T-cell (primary cell): ENCODE measurements at regions of chr1 and their contacts with region 1.

Region 1: DNA sequence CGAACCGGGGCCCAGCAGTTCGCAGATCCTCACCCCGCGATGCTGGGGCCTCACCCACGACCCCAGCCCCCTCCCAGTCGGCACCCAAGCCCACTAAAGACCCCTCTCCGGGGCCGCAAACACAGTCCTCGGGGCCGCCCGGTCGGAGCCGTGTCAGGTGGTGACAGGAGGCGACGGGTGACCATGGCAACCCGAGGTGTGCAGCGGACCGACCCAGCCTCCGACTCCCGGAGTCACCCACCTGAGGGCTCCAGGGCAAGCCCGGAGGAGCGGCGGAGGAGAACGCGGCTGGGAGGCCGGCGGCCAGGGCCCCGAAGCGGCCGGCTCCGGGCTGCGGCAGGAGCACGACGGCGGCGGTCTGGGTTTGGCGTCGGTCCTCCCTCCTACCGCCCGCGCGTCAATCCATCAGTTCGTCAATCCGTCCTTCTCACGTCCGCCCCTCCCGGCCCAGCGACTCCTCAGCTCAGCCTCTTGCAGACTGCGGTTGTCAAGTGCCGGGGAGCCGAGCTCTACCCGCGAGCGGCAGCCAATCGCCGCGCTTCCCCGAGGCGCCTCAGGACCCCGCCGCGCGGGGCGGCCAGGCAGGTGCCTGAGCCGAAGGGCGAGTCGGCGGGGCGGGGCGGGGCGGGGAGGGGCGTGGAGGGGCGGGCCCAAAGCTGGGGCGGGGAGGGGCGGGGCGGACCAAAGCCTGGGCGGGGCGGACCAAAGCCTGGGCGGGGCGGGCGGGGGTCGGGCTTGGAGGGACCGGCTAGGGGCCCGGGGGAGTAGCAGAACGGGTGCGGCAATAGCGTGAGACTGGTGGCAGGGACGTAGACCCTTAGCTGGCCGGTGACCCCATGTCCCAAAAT is at the start of gene WDR47:
- DNase-seq: peak; percentile 89 to 98 (median 96)
- ATAC-seq: peak; percentile 95 to 99 (median 98)
- H3K4me3 ChIP-seq: peak within 1 kb of the TSS; percentile 75 to 97
- H3K4me3 Mint-ChIP-seq: peak within 1 kb of the TSS; percentile 84 to 92 (median 85)
- H3K27ac ChIP-seq: peak within 1 kb of the TSS; percentile 75
- H3K27ac Mint-ChIP-seq: peak within 1 kb of the TSS; percentile 75 to 83
- H3K4me1 ChIP-seq: peaks cover 3 to 14% of the 10 kb centered on the region in 2 experiments
- H3K4me1 Mint-ChIP-seq: peaks cover 8 to 23% (median 19%) of the 10 kb centered on the region in 3 donors
- H3K27me3 ChIP-seq: no peaks in the 10 kb centered on the region
- H3K27me3 Mint-ChIP-seq: no peaks in the 10 kb centered on the region
- total RNA-seq, gene WDR47: 13.6 to 18.2 (median 17.9) TPM

Region 2: GRCh38 chr1:108983114-108983513 is 58.7 kb before region 1 on chr1:
- CTCF ChIA-PET with region 1: no interaction called
- POLR2A ChIA-PET with region 1: no interaction called
- DNase-seq: no peak
- ATAC-seq: no peak
- H3K4me3 ChIP-seq: no peak overlapping the region
- H3K4me3 Mint-ChIP-seq: no peak overlapping the region
- H3K27ac ChIP-seq: no peak overlapping the region
- H3K27ac Mint-ChIP-seq: no peak overlapping the region
- H3K4me1 ChIP-seq: no peaks in the 10 kb centered on the region
- H3K4me1 Mint-ChIP-seq: no peaks in the 10 kb centered on the region
- H3K27me3 ChIP-seq: no peaks in the 10 kb centered on the region
- H3K27me3 Mint-ChIP-seq: no peaks in the 10 kb centered on the region

Region 3: GRCh38 chr1:109011335-109011734 is 30.5 kb before region 1 on chr1:
- CTCF ChIA-PET with region 1: interaction called in 1 of 2 experiments, 10 read pairs
- POLR2A ChIA-PET with region 1: no interaction called
- DNase-seq: no peak
- ATAC-seq: no peak
- H3K4me3 ChIP-seq: no peak overlapping the region
- H3K4me3 Mint-ChIP-seq: no peak overlapping the region
- H3K27ac ChIP-seq: no peak overlapping the region
- H3K27ac Mint-ChIP-seq: no peak overlapping the region
- H3K4me1 ChIP-seq: no peaks in the 10 kb centered on the region
- H3K4me1 Mint-ChIP-seq: no peaks in the 10 kb centered on the region
- H3K27me3 ChIP-seq: no peaks in the 10 kb centered on the region
- H3K27me3 Mint-ChIP-seq: no peaks in the 10 kb centered on the region

Region 4: DNA sequence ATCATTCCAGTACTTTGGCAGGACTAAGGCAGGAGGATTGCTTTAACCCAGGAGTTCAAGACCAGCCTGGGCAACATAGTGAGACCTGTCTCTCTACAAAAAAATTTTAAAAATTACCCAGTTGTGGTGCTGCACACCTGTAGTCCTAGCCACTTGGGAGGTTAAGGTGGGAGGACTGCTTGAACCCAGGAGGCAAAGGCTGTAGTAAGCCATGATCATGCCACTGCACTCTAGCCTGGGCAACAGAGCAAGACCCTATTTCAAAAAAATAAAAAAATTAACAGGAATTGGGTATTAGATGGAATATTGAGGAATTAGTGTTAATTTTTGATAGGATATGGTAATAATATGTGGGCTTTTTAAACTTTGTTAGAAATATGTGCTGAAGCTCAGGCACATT is 17.2 kb after region 1 on chr1:
- CTCF ChIA-PET with region 1: no interaction called
- POLR2A ChIA-PET with region 1: no interaction called
- DNase-seq: no peak
- ATAC-seq: no peak
- H3K4me3 ChIP-seq: no peak overlapping the region
- H3K4me3 Mint-ChIP-seq: no peak overlapping the region
- H3K27ac ChIP-seq: no peak overlapping the region
- H3K27ac Mint-ChIP-seq: no peak overlapping the region
- H3K4me1 ChIP-seq: no peaks in the 10 kb centered on the region
- H3K4me1 Mint-ChIP-seq: no peaks in the 10 kb centered on the region
- H3K27me3 ChIP-seq: no peaks in the 10 kb centered on the region
- H3K27me3 Mint-ChIP-seq: no peaks in the 10 kb centered on the region

Region 5: DNA sequence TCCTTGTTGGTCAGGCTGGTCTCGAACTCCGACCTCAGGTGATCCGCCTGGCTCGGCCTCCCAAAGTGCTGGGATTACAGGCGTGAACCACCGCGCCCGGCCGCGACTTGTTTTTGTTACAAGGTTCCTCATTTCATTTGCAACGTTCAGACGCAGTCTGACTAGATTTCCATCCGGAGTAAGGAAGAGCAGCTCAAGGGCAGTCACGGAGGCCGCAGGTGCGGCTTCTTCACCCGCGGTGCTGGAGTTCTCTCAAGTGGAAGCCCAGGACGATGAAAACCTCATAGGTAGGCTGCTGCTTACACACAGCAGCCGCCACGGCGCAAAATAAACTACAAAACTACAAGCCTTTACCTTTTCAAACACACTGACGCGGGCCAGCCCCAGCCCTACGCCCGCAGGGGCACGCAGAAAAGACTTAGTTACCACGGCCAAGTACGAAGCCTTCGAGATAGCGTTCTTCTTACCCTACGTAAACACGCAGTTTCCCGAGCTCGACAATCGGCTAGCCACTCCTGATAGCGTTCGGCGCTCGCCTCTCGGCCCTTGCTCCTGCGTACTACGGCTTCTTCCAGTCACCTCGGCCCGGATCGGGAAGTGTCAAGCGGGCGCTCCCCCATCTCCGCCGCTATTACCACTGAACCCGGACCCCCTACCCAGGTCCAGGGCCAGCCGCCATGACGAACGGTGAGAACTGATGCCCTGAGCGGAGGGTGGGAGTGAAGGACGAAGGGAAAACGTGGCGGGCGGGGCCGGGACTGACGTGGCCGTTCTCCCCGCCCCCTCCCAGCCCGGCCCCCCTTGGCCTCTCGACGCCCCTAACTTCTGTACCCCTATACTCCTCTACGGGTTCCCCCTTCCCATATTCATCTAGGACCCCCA is 48.6 kb after region 1 on chr1 and contains the start of gene TMEM167B:
- CTCF ChIA-PET with region 1: interaction called, 5 to 10 read pairs
- POLR2A ChIA-PET with region 1: interaction called in 1 of 2 experiments, 4 read pairs
- DNase-seq: peak; percentile 76 to 92 (median 87)
- ATAC-seq: peak; percentile 92 to 97 (median 95)
- H3K4me3 ChIP-seq: peak within 1 kb of the TSS; percentile 75 to 76
- H3K4me3 Mint-ChIP-seq: peak within 1 kb of the TSS; percentile 91 to 98 (median 94)
- H3K27ac ChIP-seq: peak within 1 kb of the TSS; percentile 96
- H3K27ac Mint-ChIP-seq: peak within 1 kb of the TSS; percentile 97 to 98
- H3K4me1 ChIP-seq: peaks cover 9 to 18% of the 10 kb centered on the region in 2 experiments
- H3K4me1 Mint-ChIP-seq: peaks cover 29 to 45% (median 42%) of the 10 kb centered on the region in 3 donors
- H3K27me3 ChIP-seq: no peaks in the 10 kb centered on the region
- H3K27me3 Mint-ChIP-seq: no peaks in the 10 kb centered on the region
- total RNA-seq, gene TMEM167B: 33.2 to 55.1 (median 37.1) TPM

Region 6: GRCh38 chr1:109235137-109235536 is 193.3 kb after region 1 on chr1:
- CTCF ChIA-PET with region 1: no interaction called
- POLR2A ChIA-PET with region 1: no interaction called
- DNase-seq: no peak
- ATAC-seq: no peak
- H3K4me3 ChIP-seq: no peak overlapping the region
- H3K4me3 Mint-ChIP-seq: no peak overlapping the region
- H3K27ac ChIP-seq: no peak overlapping the region
- H3K27ac Mint-ChIP-seq: peak overlapping the region in 1 of 2 donors; percentile 8
- H3K4me1 ChIP-seq: no peaks in the 10 kb centered on the region
- H3K4me1 Mint-ChIP-seq: peaks cover 7 to 15% (median 11%) of the 10 kb centered on the region in 3 donors
- H3K27me3 ChIP-seq: no peaks in the 10 kb centered on the region
- H3K27me3 Mint-ChIP-seq: no peaks in the 10 kb centered on the region

Region 7: GRCh38 chr1:109248797-109249642 is 207.2 kb after region 1 on chr1 and contains the start of gene CELSR2:
- CTCF ChIA-PET with region 1: no interaction called
- POLR2A ChIA-PET with region 1: no interaction called
- DNase-seq: peak in 34 of 35 experiments; percentile 24 to 79 (median 51)
- ATAC-seq: peak; percentile 93 to 98 (median 94)
- H3K4me3 ChIP-seq: peak within 1 kb of the TSS; percentile 42 to 60
- H3K4me3 Mint-ChIP-seq: peak within 1 kb of the TSS; percentile 62 to 74 (median 67)
- H3K27ac ChIP-seq: no peak within 1 kb of the TSS
- H3K27ac Mint-ChIP-seq: no peak within 1 kb of the TSS
- H3K4me1 ChIP-seq: peaks cover 0 to 33% of the 10 kb centered on the region in 2 experiments
- H3K4me1 Mint-ChIP-seq: peaks cover 4 to 17% (median 5%) of the 10 kb centered on the region in 3 donors
- H3K27me3 ChIP-seq: peaks cover 0 to 45% of the 10 kb centered on the region in 2 experiments
- H3K27me3 Mint-ChIP-seq: peaks cover 6 to 7% of the 10 kb centered on the region in 2 donors
- total RNA-seq, gene CELSR2: 4.1 to 5.3 (median 4.7) TPM

Region 8: DNA sequence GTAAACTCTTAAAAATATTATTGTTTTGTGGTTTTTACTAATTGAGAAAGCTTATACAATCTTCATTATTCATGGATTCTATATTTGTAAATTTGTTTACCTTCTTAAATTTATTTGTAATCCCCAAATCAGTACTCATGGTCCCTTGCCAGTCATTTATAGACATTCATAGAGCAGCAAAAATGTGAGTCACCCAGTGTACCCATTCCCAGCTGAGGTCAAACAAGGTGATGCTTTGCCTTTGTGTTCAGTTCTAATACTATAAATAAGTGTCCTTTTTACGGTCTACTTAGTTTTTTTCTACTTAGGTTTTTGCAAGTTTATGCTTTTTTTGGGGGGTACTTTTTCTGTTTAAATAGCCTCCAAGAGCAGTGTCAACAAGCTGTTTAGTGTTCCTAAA is 319.8 kb after region 1 on chr1:
- CTCF ChIA-PET with region 1: no interaction called
- POLR2A ChIA-PET with region 1: interaction called in 1 of 2 experiments, 10 read pairs
- DNase-seq: no peak
- ATAC-seq: no peak
- H3K4me3 ChIP-seq: no peak overlapping the region
- H3K4me3 Mint-ChIP-seq: no peak overlapping the region
- H3K27ac ChIP-seq: no peak overlapping the region
- H3K27ac Mint-ChIP-seq: no peak overlapping the region
- H3K4me1 ChIP-seq: no peaks in the 10 kb centered on the region
- H3K4me1 Mint-ChIP-seq: no peaks in the 10 kb centered on the region
- H3K27me3 ChIP-seq: peaks cover 0 to 5% of the 10 kb centered on the region in 2 experiments
- H3K27me3 Mint-ChIP-seq: peaks cover 10 to 16% of the 10 kb centered on the region in 2 donors